IMR-90 (cell line): ENCODE measurements at regions of chr6 and their contacts with region 1.

Region 1: DNA sequence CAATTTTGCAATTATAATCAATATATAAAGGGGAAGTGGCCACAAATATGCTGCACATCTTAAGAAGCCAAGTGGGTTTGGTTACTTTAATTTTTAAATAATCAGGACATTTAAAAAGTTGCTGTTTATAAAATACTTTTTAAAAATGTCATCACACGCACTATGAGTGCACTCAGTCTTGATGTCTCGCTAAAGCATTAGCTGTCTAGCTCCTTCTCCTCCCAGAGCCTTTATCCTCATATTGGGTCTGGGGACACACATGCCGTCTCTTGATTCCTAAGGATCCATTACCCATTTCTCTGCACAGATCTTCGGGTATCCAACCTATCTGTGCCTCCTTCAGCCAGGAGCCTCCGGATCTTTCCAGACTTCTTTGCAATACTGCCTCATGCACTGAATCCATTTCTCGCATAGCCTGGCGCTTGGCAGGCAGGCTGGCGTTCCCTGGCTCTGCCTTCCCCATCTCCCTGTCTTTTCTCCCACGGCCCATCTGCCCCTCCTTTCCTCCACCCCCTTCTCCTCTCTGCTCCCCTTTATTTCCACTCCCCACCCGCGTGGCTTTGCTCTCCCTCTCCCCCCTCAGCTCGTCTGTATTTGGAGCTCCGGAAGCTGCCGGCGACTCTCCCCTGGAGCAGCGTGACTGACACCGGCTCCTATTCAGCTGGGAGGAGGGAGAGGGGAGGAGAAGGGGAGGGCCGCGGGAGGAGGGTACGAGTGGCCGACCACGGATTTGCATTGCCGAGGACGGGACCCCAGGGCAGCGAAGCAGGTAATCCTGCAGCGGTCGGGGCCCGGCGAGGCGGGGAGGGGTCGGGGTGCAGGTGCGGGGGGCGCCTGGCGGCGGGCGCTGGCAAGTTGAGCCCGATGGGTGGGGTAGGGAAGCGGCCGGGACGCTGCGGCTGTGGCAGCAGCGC is at the start of gene CAP2:
- DNase-seq: peak; percentile 59
- ATAC-seq: peak; percentile 91
- H3K4me3 ChIP-seq: peak within 1 kb of the TSS; percentile 53
- H3K27ac ChIP-seq: peak within 1 kb of the TSS; percentile 94
- H3K4me1 ChIP-seq: peaks cover 6% of the 10 kb centered on the region; the same call in 1 of the 2 replicates
- H3K27me3 ChIP-seq: no peaks in the 10 kb centered on the region
- CTCF ChIP-seq: no peak
- POLR2A ChIP-seq: peak; percentile 39; the same call in 1 of the 2 replicates
- RAD21 ChIP-seq: peak; percentile 4; the same call in 1 of the 2 replicates
- total RNA-seq, gene CAP2: 14.5 and 16.1 TPM in 2 replicates

Region 2: DNA sequence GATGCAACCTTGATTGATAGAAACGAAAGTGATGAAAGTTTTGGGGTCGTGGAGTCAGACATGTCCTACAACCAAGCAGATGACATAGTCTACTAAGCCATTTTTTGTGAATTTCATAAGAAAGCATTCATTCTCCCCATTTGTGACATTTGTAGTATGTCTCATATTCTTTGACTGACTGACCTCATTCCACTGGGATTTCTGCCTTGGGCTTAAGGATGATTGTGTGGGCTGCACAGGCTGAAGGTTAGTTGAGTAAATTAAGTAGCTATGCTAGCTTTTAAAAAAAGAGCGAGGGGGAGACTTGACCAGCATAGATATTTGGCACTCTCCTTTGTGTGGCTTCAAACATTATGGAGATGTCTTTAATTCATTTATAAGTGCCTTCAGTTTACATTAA is 262.4 kb before region 1 on chr6:
- CTCF ChIA-PET with region 1: no interaction called
- POLR2A ChIA-PET with region 1: no interaction called
- dilution Hi-C with region 1: no loop called
- in situ Hi-C with region 1: no loop called
- intact Hi-C with region 1: no loop called
- DNase-seq: peak; percentile 38
- ATAC-seq: peak; percentile 49
- H3K4me3 ChIP-seq: no peak overlapping the region
- H3K27ac ChIP-seq: no peak overlapping the region
- H3K4me1 ChIP-seq: no peaks in the 10 kb centered on the region
- H3K27me3 ChIP-seq: peaks cover 20% of the 10 kb centered on the region
- CTCF ChIP-seq: no peak
- POLR2A ChIP-seq: no peak
- RAD21 ChIP-seq: no peak

Region 3: DNA sequence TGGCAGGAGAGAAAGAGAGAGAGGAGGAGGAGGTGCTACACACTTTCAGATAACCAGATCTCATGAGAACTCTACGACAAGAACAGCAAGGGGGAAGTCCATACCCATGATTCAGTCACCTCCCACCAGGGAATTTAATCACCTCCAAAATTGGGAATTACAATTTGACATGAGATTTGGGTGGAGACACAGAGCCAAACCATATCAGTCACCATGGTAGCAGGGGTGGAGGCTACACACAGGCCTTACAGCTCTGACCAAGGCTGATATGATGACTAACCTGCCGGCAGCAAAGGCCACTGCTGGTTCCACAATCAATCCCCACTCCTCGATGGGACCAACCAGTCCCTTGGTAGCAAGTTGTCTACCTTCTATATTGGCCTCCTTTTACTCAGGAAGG is 125.7 kb before region 1 on chr6:
- CTCF ChIA-PET with region 1: no interaction called
- POLR2A ChIA-PET with region 1: no interaction called
- dilution Hi-C with region 1: no loop called
- in situ Hi-C with region 1: no loop called
- intact Hi-C with region 1: no loop called
- DNase-seq: no peak
- ATAC-seq: no peak
- H3K4me3 ChIP-seq: no peak overlapping the region
- H3K27ac ChIP-seq: no peak overlapping the region
- H3K4me1 ChIP-seq: peaks cover 12% of the 10 kb centered on the region; the same call in 1 of the 2 replicates
- H3K27me3 ChIP-seq: no peaks in the 10 kb centered on the region
- CTCF ChIP-seq: no peak
- POLR2A ChIP-seq: no peak
- RAD21 ChIP-seq: no peak

Region 4: GRCh38 chr6:17281100-17281494 is 112.1 kb before region 1 on chr6 and contains the start of gene RBM24:
- CTCF ChIA-PET with region 1: no interaction called
- POLR2A ChIA-PET with region 1: no interaction called
- dilution Hi-C with region 1: no loop called
- in situ Hi-C with region 1: no loop called
- intact Hi-C with region 1: loop called (anchors 1 kb)
- DNase-seq: peak; percentile 79
- ATAC-seq: peak; percentile 73
- H3K4me3 ChIP-seq: peak within 1 kb of the TSS; percentile 98
- H3K27ac ChIP-seq: peak within 1 kb of the TSS; percentile 79
- H3K4me1 ChIP-seq: peaks cover 16% of the 10 kb centered on the region
- H3K27me3 ChIP-seq: no peaks in the 10 kb centered on the region
- CTCF ChIP-seq: peak; percentile 53
- POLR2A ChIP-seq: no peak
- RAD21 ChIP-seq: peak; percentile 45
- total RNA-seq, gene RBM24: 4.1 and 6.7 TPM in 2 replicates

Region 5: DNA sequence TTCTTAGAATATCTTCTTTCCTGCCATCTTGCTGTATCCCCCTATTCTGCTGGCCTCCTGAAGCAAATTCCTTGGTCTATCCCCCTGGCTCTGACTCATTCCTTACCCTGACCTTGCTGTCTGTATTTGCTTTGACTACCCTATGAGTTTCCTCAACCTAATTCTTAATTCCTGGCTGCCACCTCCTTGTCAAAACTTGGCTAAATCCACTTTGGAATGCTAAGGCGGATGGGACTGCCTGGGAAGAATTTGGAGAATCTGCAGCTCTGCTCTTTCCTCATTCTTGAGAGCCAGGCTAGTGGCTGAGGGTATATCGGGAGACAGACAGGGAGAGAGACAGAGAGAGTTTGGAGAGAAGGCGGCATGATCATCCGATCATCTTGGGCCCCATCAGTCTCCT is 24.6 kb after region 1 on chr6:
- CTCF ChIA-PET with region 1: no interaction called
- POLR2A ChIA-PET with region 1: interaction called, 10 read pairs
- dilution Hi-C with region 1: no loop called
- in situ Hi-C with region 1: no loop called
- intact Hi-C with region 1: no loop called
- DNase-seq: peak; percentile 91
- ATAC-seq: peak; percentile 76
- H3K4me3 ChIP-seq: peak overlapping the region; percentile 9; the same call in 1 of the 2 replicates
- H3K27ac ChIP-seq: peak overlapping the region; percentile 86
- H3K4me1 ChIP-seq: peaks cover 21% of the 10 kb centered on the region
- H3K27me3 ChIP-seq: no peaks in the 10 kb centered on the region
- CTCF ChIP-seq: no peak
- POLR2A ChIP-seq: peak; percentile 68; the same call in 1 of the 2 replicates
- RAD21 ChIP-seq: no peak

Region 6: DNA sequence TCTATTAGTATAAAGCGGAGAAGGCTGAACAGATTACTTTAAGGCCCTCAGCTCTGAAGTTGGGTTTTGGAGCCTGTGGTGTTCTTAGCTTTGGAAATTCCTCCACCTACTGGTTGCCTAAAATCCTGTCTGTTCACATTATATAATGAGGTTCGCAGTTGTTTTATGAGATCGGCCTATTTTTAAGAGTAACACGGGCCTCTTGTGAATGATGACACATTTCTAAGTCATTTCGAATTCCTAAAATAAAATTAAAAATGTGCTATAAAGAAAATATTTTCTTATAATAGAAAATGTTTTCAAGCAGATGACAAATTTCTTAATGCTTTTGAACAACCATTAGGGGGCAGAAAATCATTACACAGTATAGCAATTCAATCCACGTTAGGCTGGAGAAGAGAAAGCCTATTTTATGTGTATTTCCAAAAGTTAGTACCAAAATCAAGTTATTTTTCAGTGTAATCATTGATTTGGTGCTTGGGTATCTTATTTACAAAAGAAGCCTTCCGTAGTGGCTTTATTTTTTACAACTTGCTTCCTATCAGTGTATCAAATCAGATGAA is 191.1 kb after region 1 on chr6:
- CTCF ChIA-PET with region 1: no interaction called
- POLR2A ChIA-PET with region 1: no interaction called
- dilution Hi-C with region 1: no loop called
- in situ Hi-C with region 1: no loop called
- intact Hi-C with region 1: loop called (anchors 2 kb)
- DNase-seq: peak; percentile 86
- ATAC-seq: peak; percentile 91
- H3K4me3 ChIP-seq: no peak overlapping the region
- H3K27ac ChIP-seq: no peak overlapping the region
- H3K4me1 ChIP-seq: peaks cover 2% of the 10 kb centered on the region; the same call in 1 of the 2 replicates
- H3K27me3 ChIP-seq: no peaks in the 10 kb centered on the region
- CTCF ChIP-seq: peak; percentile 79
- POLR2A ChIP-seq: no peak
- RAD21 ChIP-seq: peak; percentile 83